ENCODE measurements at regions of chr9 and their contacts with region 1.

Region 1: DNA sequence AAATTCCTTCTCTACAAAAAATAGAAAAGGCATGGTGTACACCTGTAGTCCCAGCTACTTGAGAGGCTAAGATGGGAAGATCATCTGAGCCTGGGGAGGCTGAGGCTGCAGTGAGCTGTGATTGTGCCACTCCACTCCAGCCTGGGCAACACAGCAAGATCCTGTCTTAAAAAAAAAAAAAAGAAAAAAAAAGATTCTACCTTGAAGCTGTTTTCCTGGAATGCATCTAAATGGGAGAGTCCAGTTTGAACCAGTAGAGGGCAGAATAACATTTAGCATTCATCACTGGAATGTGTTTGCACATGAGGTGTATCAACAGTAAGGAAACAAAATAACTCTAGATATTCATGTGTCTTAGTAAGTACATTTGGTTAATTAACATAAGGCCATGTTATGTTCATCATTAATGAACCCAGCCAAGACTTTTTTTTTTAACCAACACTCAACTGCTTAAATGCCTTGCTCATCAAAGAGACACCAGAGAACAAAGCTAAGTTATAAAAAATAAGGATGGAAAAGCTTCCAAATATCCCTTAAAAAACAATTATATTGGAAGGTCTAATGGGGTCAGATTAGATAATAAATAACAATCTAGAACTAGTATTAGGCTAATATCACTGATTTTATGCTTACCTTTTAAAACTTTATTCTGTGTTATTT is 16.1 kb downstream of the IFNE start:
- DNase-seq: peak in 1 of 4 donors; percentile 25
- ATAC-seq: peak; percentile 74
- H3K4me3 ChIP-seq: no peak overlapping the region
- H3K27ac ChIP-seq: no peak overlapping the region
- H3K4me1 ChIP-seq: no peaks in the 10 kb centered on the region
- H3K27me3 ChIP-seq: no peaks in the 10 kb centered on the region
- CTCF ChIP-seq: peak in 6 of 7 experiments; percentile 50 to 79 (median 68)
- POLR2A ChIP-seq: no peak

Region 2: DNA sequence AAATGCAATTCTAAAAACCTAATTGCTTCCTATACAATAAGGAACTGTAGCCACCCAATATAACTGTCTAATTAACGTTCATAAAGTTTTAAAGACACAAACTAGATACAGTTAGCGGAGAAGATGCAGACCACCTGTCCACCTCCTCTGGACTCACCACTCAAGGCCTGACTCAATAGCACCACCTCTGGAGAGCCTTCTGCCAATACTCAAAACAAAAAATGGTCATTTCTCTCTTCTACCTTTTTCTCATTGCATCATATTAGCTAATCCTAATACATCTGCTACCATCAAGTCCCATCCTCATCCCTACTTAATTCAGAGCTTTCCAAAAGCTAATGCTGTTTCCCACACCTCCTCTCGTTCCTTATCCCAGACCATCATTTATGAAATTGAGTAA is 1003.6 kb before region 1 on chr9:
- intact Hi-C with region 1: no loop called
- DNase-seq: no peak
- ATAC-seq: no peak
- H3K4me3 ChIP-seq: no peak overlapping the region
- H3K27ac ChIP-seq: no peak overlapping the region
- H3K4me1 ChIP-seq: no peaks in the 10 kb centered on the region
- H3K27me3 ChIP-seq: no peaks in the 10 kb centered on the region
- CTCF ChIP-seq: no peak
- POLR2A ChIP-seq: no peak

Region 3: GRCh38 chr9:21513431-21513830 is 47.4 kb after region 1 on chr9:
- intact Hi-C with region 1: no loop called
- DNase-seq: no peak
- ATAC-seq: no peak
- H3K4me3 ChIP-seq: no peak overlapping the region
- H3K27ac ChIP-seq: no peak overlapping the region
- H3K4me1 ChIP-seq: no peaks in the 10 kb centered on the region
- H3K27me3 ChIP-seq: no peaks in the 10 kb centered on the region
- CTCF ChIP-seq: no peak
- POLR2A ChIP-seq: no peak

Region 4: DNA sequence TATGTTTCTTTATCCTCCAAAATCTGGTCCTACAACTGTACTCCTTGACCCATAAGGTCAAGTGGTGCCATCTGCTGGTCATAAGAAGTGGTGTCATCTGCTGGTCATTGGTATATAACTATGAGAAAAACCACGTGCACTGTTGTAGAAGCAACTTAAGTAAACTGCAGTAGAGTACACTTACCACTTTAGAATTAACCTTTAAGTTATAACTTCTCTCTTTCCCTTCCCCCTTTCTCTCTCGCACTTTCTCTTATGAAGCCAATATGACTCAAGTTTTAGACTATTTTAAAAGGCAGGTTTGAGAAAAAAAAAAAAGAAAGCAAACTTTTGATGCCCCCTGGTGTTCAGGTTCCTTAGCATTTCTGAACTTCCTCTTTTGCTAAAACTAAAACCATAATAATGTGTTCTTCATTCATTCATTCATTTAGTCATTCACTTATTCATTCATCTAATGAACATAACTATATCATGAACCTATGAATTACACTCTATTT is 323.6 kb after region 1 on chr9:
- intact Hi-C with region 1: loop called (anchors 5 kb)
- DNase-seq: peak; percentile 58 to 86 (median 70)
- ATAC-seq: peak; percentile 97
- H3K4me3 ChIP-seq: no peak overlapping the region
- H3K27ac ChIP-seq: no peak overlapping the region
- H3K4me1 ChIP-seq: no peaks in the 10 kb centered on the region
- H3K27me3 ChIP-seq: no peaks in the 10 kb centered on the region
- CTCF ChIP-seq: peak; percentile 64 to 89 (median 80)
- POLR2A ChIP-seq: no peak